Esophagus muscularis mucosa (tissue), 4 donors: ENCODE measurements at regions of chr2 and their contacts with region 1.

Region 1: GRCh38 chr2:237931205-237931721 is 35.6 kb upstream of the UBE2F start:
- DNase-seq: no peak
- H3K4me3 ChIP-seq: peak overlapping the region in 1 of 4 donors; percentile 5
- H3K27ac ChIP-seq: peak overlapping the region; percentile 44 to 65 (median 52)
- H3K4me1 ChIP-seq: peaks cover 0 to 24% (median 19%) of the 10 kb centered on the region in 4 donors
- H3K27me3 ChIP-seq: no peaks in the 10 kb centered on the region
- CTCF ChIP-seq: no peak
- EP300 ChIP-seq: no peak
- POLR2A ChIP-seq: no peak

Region 2: GRCh38 chr2:237961637-237962036 is 30.4 kb after region 1 on chr2:
- intact Hi-C with region 1: loop called (anchors 2 kb)
- DNase-seq: no peak
- H3K4me3 ChIP-seq: no peak overlapping the region
- H3K27ac ChIP-seq: no peak overlapping the region
- H3K4me1 ChIP-seq: peaks cover 0 to 8% (median 6%) of the 10 kb centered on the region in 4 donors
- H3K27me3 ChIP-seq: peaks cover 0 to 4% (median 0%) of the 10 kb centered on the region in 4 donors
- CTCF ChIP-seq: no peak
- EP300 ChIP-seq: no peak
- POLR2A ChIP-seq: no peak

Region 3: GRCh38 chr2:238158527-238159070 is 227.3 kb after region 1 on chr2 and contains the start of gene ERFE:
- intact Hi-C with region 1: no loop called
- DNase-seq: no peak
- H3K4me3 ChIP-seq: peak within 1 kb of the TSS; percentile 40 to 58 (median 46)
- H3K27ac ChIP-seq: no peak within 1 kb of the TSS
- H3K4me1 ChIP-seq: peaks cover 11 to 37% (median 27%) of the 10 kb centered on the region in 4 donors
- H3K27me3 ChIP-seq: peaks cover 0 to 58% (median 20%) of the 10 kb centered on the region in 4 donors
- CTCF ChIP-seq: peak in 2 of 3 experiments; percentile 41 to 67
- EP300 ChIP-seq: no peak
- POLR2A ChIP-seq: no peak
- total RNA-seq, gene ERFE: 0.39 to 0.66 TPM in 2 of 4 donors, not detected in the others